T-cell (primary cell): ENCODE measurements at regions of chr13 and their contacts with region 1.

Region 1: GRCh38 chr13:31919971-31920726 is 111.4 kb upstream of the FRY start:
- DNase-seq: no peak
- ATAC-seq: no peak
- H3K4me3 ChIP-seq: no peak overlapping the region
- H3K4me3 Mint-ChIP-seq: no peak overlapping the region
- H3K27ac ChIP-seq: no peak overlapping the region
- H3K27ac Mint-ChIP-seq: no peak overlapping the region
- H3K4me1 ChIP-seq: no peaks in the 10 kb centered on the region
- H3K4me1 Mint-ChIP-seq: peaks cover 0 to 13% (median 5%) of the 10 kb centered on the region in 3 donors
- H3K27me3 ChIP-seq: no peaks in the 10 kb centered on the region
- H3K27me3 Mint-ChIP-seq: no peaks in the 10 kb centered on the region

Region 2: DNA sequence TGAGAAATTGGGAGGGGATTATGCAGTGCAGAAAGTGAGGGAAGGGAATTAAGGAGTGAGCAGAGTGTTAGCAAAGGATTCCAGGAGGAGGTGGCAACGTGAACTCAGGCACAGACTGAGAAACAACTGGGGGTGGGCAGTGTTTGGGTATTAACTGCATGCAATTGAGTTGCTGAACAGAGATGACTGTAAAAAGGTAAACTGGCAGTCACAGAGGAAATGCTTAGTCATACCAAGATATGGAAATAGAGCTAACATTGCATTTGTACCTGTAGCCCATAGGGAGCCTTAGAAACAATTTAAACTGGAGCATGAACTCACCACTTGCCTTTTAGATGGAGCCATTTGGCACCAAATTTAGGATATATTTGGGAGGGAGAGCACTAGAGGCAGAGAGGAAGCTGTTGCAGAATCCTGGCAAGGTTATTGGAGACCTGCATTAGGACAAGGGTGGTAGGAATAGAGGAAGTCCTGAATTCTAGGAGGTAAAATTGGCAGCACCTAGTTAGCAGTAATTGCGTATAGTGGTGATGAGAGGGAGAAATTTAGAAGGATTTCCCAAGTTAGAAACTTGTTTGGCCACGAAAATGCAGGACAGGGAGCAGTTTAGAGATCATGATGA is 10.9 kb after region 1 on chr13:
- CTCF ChIA-PET with region 1: interaction called in 1 of 2 experiments, 10 read pairs
- POLR2A ChIA-PET with region 1: no interaction called
- DNase-seq: no peak
- ATAC-seq: peak in 3 of 4 experiments; percentile 48 to 71 (median 49)
- H3K4me3 ChIP-seq: no peak overlapping the region
- H3K4me3 Mint-ChIP-seq: no peak overlapping the region
- H3K27ac ChIP-seq: no peak overlapping the region
- H3K27ac Mint-ChIP-seq: no peak overlapping the region
- H3K4me1 ChIP-seq: peaks cover 0 to 12% of the 10 kb centered on the region in 2 experiments
- H3K4me1 Mint-ChIP-seq: peaks cover 8 to 15% (median 9%) of the 10 kb centered on the region in 3 donors
- H3K27me3 ChIP-seq: no peaks in the 10 kb centered on the region
- H3K27me3 Mint-ChIP-seq: peaks cover 0 to 1% of the 10 kb centered on the region in 2 donors

Region 3: DNA sequence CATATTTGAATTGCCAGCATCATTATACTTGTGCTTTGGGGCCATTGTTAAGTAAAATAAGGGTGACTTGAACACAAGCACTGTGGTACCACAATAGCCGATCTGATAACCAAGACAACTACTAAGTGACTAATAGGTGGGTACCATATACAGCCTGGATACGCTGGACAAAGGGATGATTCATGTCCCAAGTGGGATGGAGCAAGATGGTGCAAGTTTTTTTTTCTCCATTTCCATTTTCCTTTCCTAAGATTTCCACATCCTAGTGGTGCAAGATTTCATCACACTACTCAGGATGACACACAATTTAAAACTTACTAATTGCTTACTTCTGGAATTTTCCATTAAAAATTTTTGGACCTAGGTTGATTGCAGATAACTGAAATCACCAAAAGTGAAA is 410.3 kb after region 1 on chr13:
- CTCF ChIA-PET with region 1: no interaction called
- POLR2A ChIA-PET with region 1: no interaction called
- DNase-seq: no peak
- ATAC-seq: no peak
- H3K4me3 ChIP-seq: no peak overlapping the region
- H3K4me3 Mint-ChIP-seq: no peak overlapping the region
- H3K27ac ChIP-seq: no peak overlapping the region
- H3K27ac Mint-ChIP-seq: no peak overlapping the region
- H3K4me1 ChIP-seq: no peaks in the 10 kb centered on the region
- H3K4me1 Mint-ChIP-seq: no peaks in the 10 kb centered on the region
- H3K27me3 ChIP-seq: no peaks in the 10 kb centered on the region
- H3K27me3 Mint-ChIP-seq: no peaks in the 10 kb centered on the region